ENCODE measurements at regions of chr6 and their contacts with region 1.

Region 1: DNA sequence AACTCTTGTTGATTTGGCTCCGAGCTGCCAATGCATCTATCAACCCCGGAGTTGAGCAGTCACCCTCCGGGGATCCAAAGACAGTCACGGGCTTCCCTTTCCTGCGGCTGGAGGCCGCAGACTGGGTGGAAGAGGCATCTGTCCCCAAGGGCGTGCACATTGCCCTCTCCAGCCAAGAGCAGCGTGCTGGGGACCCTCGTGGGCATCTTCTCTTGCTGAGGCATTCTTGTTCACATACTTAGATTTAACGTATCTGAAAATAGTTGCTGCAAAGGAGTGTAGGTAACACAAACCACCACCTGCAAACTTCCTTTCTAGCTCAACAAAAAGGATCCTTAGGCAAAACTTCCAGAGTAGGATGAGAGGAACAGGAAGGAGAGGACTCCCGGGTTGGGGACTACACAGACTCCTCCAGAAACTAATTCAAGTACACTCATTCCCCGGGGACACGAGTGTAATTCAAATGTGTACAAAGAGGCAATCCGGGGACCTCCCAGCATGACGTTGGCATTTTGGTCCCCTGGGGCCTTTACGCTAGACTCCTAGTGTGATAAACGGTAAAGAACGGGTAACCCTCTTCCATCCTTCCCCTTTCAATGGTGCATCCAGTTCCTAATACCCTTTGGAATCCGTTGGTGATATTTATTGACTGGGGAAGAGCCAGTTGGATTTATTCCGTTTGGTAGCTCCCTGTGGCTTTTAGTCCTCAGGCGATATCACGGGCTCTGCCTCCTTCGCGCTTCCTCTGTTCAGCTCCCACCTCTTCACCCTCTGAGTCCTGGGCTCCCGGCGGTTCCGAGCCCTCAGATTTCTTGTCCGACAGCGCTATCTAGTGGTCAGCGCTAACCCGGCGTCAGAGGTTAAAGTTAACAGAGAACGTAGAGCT is 2.7 kb upstream of the COL12A1 start:
- DNase-seq: peak; percentile 41
- ATAC-seq: peak; percentile 81
- H3K4me3 ChIP-seq: peak overlapping the region in 1 of 2 experiments; percentile 49; a peak in 2 of 4 replicates
- H3K27ac ChIP-seq: no peak overlapping the region
- H3K4me1 ChIP-seq: peaks cover 10% of the 10 kb centered on the region
- H3K27me3 ChIP-seq: peaks cover 5% of the 10 kb centered on the region; the same call in 1 of the 2 replicates
- CTCF ChIP-seq: peak; percentile 89

Region 2: GRCh38 chr6:73675466-73676098 is 1533.0 kb before region 1 on chr6:
- CTCF ChIA-PET with region 1: no interaction called
- POLR2A ChIA-PET with region 1: no interaction called
- in situ Hi-C with region 1: no loop called
- intact Hi-C with region 1: loop called (anchors 10 kb)
- DNase-seq: no peak
- ATAC-seq: peak; percentile 96
- H3K4me3 ChIP-seq: no peak overlapping the region
- H3K27ac ChIP-seq: no peak overlapping the region
- H3K4me1 ChIP-seq: no peaks in the 10 kb centered on the region
- H3K27me3 ChIP-seq: no peaks in the 10 kb centered on the region
- CTCF ChIP-seq: peak; percentile 98

Region 3: DNA sequence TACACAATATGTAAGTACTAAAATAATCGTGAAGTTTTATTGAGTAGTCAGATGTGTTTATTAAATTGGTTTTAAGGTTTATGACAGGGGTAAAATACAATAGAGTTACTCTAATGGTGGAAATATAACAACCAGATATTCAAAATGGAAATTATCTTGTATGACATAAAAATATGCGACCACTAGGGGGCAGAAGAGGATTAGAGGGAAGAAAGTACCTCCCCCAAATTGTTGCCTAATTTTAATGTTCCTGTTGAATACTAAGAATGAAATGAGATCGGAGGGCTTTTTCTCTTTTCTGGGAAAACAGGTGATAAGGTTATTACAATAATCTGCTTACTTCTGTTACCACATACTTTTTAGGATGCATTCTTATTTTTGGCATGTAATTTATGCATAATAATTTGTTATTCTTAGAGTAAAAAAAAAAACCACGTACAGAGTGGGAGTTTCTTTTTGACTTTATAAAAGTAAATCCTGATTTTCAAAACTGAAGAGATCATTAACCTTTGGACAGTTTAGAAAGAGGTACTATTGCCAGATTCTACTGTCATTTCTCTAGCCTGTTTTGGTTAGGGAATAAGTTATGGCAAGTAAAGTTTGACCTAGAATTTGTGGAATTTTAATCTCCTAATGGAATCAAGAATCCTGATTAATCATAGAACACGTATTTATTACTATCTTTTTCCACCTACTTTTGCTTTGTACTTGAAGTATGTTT is 1353.4 kb before region 1 on chr6:
- CTCF ChIA-PET with region 1: no interaction called
- POLR2A ChIA-PET with region 1: no interaction called
- in situ Hi-C with region 1: no loop called
- intact Hi-C with region 1: loop called (anchors 5 kb)
- DNase-seq: no peak
- ATAC-seq: no peak
- H3K4me3 ChIP-seq: no peak overlapping the region
- H3K27ac ChIP-seq: no peak overlapping the region
- H3K4me1 ChIP-seq: no peaks in the 10 kb centered on the region
- H3K27me3 ChIP-seq: no peaks in the 10 kb centered on the region
- CTCF ChIP-seq: peak; percentile 81; the same call in 1 of the 2 replicates

Region 4: GRCh38 chr6:73951183-73951582 is 1257.4 kb before region 1 on chr6:
- CTCF ChIA-PET with region 1: no interaction called
- POLR2A ChIA-PET with region 1: no interaction called
- in situ Hi-C with region 1: no loop called
- intact Hi-C with region 1: no loop called
- DNase-seq: no peak
- ATAC-seq: no peak
- H3K4me3 ChIP-seq: no peak overlapping the region
- H3K27ac ChIP-seq: no peak overlapping the region
- H3K4me1 ChIP-seq: no peaks in the 10 kb centered on the region
- H3K27me3 ChIP-seq: 0 out of 2 replicates have a peak, but pooled peaks cover 2% of the 10 kb centered on the region
- CTCF ChIP-seq: no peak

Region 5: GRCh38 chr6:74091136-74091793 is 1117.3 kb before region 1 on chr6:
- CTCF ChIA-PET with region 1: interaction called, 6 read pairs
- POLR2A ChIA-PET with region 1: no interaction called
- in situ Hi-C with region 1: no loop called
- intact Hi-C with region 1: loop called (anchors 5 kb)
- DNase-seq: peak; percentile 28
- ATAC-seq: peak; percentile 72; the same call in 1 of the 2 replicates
- H3K4me3 ChIP-seq: no peak overlapping the region
- H3K27ac ChIP-seq: no peak overlapping the region
- H3K4me1 ChIP-seq: no peaks in the 10 kb centered on the region
- H3K27me3 ChIP-seq: no peaks in the 10 kb centered on the region
- CTCF ChIP-seq: peak; percentile 78

Region 6: DNA sequence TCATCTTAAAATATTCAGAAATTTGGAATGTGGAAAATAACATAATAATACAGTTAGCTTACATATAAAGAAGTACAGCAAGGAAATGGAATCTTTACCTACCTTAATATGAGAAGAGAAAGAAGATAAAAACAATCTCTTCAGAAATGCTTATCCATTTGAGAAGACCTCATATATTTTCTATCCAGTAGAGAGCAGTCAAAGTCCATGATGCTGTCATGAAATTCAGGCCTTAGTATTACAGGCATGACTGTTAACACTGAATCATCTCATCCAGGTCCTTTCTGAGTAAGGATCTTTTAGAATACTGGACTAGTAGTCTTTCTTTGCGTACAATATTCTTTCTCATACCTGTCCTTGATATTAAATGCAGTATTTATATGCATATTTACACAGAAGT is 799.1 kb before region 1 on chr6:
- CTCF ChIA-PET with region 1: no interaction called
- POLR2A ChIA-PET with region 1: no interaction called
- in situ Hi-C with region 1: no loop called
- intact Hi-C with region 1: loop called (anchors 2 kb)
- DNase-seq: peak; percentile 60
- ATAC-seq: no peak
- H3K4me3 ChIP-seq: no peak overlapping the region
- H3K27ac ChIP-seq: no peak overlapping the region
- H3K4me1 ChIP-seq: no peaks in the 10 kb centered on the region
- H3K27me3 ChIP-seq: no peaks in the 10 kb centered on the region
- CTCF ChIP-seq: peak; percentile 24; the same call in 1 of the 2 replicates

Measured in Panc1 (cell line).